ENCODE measurements at regions of chr7 and their contacts with region 1.

Region 1: GRCh38 chr7:151408839-151409666 is 785 bp downstream of the WDR86 start:
- DNase-seq: peak; percentile 27
- H3K4me3 Mint-ChIP-seq: peak overlapping the region; percentile 22
- H3K27ac Mint-ChIP-seq: no peak overlapping the region
- H3K4me1 Mint-ChIP-seq: peaks cover 35% of the 10 kb centered on the region
- H3K27me3 Mint-ChIP-seq: peaks cover 41% of the 10 kb centered on the region

Region 2: GRCh38 chr7:151420144-151420543 is 11.1 kb after region 1 on chr7:
- CTCF ChIA-PET with region 1: no interaction called
- intact Hi-C with region 1: no loop called
- DNase-seq: no peak
- H3K4me3 Mint-ChIP-seq: no peak overlapping the region
- H3K27ac Mint-ChIP-seq: no peak overlapping the region
- H3K4me1 Mint-ChIP-seq: peaks cover 5% of the 10 kb centered on the region
- H3K27me3 Mint-ChIP-seq: no peaks in the 10 kb centered on the region

Region 3: GRCh38 chr7:151432791-151433521 is 23.9 kb after region 1 on chr7:
- CTCF ChIA-PET with region 1: no interaction called
- intact Hi-C with region 1: loop called (anchors 1 kb)
- DNase-seq: peak; percentile 91
- H3K4me3 Mint-ChIP-seq: peak overlapping the region; percentile 46
- H3K27ac Mint-ChIP-seq: peak overlapping the region; percentile 87
- H3K4me1 Mint-ChIP-seq: peaks cover 47% of the 10 kb centered on the region
- H3K27me3 Mint-ChIP-seq: no peaks in the 10 kb centered on the region

Region 4: DNA sequence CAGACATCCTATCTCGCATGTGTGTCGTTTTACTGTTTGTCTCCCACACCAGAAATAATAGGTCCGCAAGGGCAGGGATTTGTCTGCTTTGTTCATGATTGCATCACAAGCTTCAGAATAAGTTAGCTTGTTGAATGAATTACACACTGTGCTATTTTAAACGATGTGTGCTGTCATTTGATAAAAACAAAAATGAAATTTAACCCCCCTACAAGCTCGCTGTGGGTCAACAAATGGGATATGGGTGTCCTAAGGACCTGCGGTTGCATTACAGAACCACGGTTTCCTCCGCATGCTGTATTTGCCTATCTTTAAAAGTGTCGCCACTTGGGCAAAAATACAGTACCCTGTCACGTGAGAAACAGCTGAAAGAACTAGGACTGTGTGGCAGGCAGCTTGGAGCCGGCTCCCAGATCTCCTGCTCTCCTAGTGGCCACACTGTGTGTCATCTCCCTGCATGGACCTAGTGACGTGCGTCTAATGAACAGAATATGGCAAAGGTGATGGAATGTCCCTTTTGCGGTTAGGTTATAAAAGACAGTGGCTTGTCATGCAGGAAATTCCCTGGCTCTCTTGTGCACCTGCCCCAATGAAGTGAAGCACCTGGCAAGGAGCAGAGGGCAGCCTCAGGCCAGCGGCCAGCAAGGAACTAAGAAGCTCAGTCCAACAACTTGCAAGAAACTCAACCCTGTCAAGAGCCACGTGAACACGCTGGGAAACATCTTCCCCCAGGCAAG is 63.8 kb after region 1 on chr7:
- CTCF ChIA-PET with region 1: no interaction called
- intact Hi-C with region 1: loop called (anchors 1 kb)
- DNase-seq: no peak
- H3K4me3 Mint-ChIP-seq: no peak overlapping the region
- H3K27ac Mint-ChIP-seq: no peak overlapping the region
- H3K4me1 Mint-ChIP-seq: peaks cover 31% of the 10 kb centered on the region
- H3K27me3 Mint-ChIP-seq: no peaks in the 10 kb centered on the region

Region 5: DNA sequence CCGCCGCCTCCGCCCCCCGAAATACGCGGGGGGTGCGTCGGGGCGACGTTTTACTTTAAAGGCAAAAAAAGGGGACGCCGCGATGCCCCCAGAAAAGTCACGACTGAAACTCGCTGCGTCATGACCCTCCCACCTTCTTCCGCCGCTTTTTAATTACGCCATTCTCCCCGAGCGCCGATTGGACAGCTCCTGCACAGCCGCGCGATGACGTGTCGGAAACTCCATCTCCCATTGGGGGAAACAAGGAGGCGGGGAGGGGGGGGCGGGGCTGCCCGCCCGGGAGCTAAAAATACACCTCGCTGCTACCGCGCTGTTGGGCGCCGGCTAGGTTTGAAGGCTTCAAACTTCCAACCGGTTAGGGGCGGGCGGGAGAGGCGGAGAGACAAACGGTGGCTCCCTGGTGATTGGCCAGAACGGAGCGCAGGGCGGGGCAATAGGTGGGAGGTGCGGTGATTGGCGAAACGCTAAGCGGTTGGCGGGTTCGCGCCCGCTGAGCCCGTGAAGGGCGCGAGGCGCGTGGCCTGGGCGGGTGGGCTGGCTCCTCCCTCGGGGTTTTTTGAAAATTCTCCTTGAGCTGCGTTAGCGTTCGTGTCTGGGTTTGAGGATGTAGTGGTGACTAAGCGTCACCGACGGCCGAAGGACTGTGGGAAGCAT is 110.8 kb after region 1 on chr7 and contains the start of gene RHEB:
- CTCF ChIA-PET with region 1: no interaction called
- intact Hi-C with region 1: no loop called
- DNase-seq: peak; percentile 99
- H3K4me3 Mint-ChIP-seq: peak within 1 kb of the TSS; percentile 98
- H3K27ac Mint-ChIP-seq: peak within 1 kb of the TSS; percentile 98
- H3K4me1 Mint-ChIP-seq: peaks cover 38% of the 10 kb centered on the region
- H3K27me3 Mint-ChIP-seq: no peaks in the 10 kb centered on the region
- total RNA-seq, gene RHEB: 58.7 to 62.7 TPM

Measured in activated naive CD4-positive, alpha-beta T cell treated with anti-CD3 and anti-CD28 coated beads for 36 hours (primary cell).